Activated B cell treated with CpG ODN at 0.5 μM for 24 hours (primary cell): ENCODE measurements at regions of chr1 and their contacts with region 1.

Region 1: DNA sequence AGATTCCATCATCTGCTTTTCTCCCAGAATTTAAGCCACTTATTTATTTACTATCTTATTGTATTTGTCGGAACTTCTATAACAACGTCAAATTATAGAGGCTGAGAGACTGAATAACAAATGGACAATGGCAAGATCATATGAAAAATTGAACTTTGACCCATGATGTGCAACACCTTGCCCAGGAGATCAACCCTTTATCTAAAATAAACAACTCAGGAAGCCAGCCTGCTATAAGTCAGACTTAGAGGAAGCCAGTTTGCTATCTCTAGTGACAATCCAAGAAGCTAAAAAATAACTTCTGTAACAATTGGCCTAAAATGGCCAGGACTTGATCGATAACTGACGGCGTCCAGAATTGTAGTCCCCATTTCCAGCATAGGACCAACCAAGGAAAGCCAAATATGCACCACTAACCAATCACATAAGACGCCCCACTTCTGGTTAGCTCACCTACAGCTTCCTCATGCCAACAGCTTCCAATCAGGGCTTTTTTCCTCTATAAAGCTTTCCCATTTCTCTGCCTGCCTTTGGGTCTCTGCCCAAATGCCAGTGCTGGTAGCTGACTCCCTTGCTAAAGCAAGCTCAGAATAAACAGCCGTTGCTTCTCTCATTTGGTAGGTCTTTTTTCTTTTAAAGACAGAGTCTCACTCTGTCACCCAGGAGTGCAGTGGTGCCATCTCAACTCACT is 28.5 kb downstream of the ANP32E start:
- DNase-seq: no peak
- ATAC-seq: no peak
- H3K4me3 Mint-ChIP-seq: no peak overlapping the region
- H3K27ac Mint-ChIP-seq: no peak overlapping the region
- H3K4me1 Mint-ChIP-seq: no peaks in the 10 kb centered on the region
- H3K27me3 Mint-ChIP-seq: peaks cover 2% of the 10 kb centered on the region
- CTCF ChIP-seq: no peak

Region 2: GRCh38 chr1:150121236-150121862 is 86.1 kb before region 1 on chr1:
- CTCF ChIA-PET with region 1: no interaction called
- POLR2A ChIA-PET with region 1: interaction called, 10 read pairs
- intact Hi-C with region 1: no loop called
- DNase-seq: no peak
- ATAC-seq: no peak
- H3K4me3 Mint-ChIP-seq: no peak overlapping the region
- H3K27ac Mint-ChIP-seq: peak overlapping the region; percentile 27
- H3K4me1 Mint-ChIP-seq: peaks cover 14% of the 10 kb centered on the region
- H3K27me3 Mint-ChIP-seq: no peaks in the 10 kb centered on the region
- CTCF ChIP-seq: no peak

Region 3: GRCh38 chr1:150243003-150243402 is 35.6 kb after region 1 on chr1:
- CTCF ChIA-PET with region 1: no interaction called
- POLR2A ChIA-PET with region 1: no interaction called
- intact Hi-C with region 1: no loop called
- DNase-seq: no peak
- ATAC-seq: no peak
- H3K4me3 Mint-ChIP-seq: no peak overlapping the region
- H3K27ac Mint-ChIP-seq: no peak overlapping the region
- H3K4me1 Mint-ChIP-seq: no peaks in the 10 kb centered on the region
- H3K27me3 Mint-ChIP-seq: peaks cover 1% of the 10 kb centered on the region
- CTCF ChIP-seq: no peak

Region 4: GRCh38 chr1:150259758-150260669 is 52.6 kb after region 1 on chr1:
- CTCF ChIA-PET with region 1: no interaction called
- POLR2A ChIA-PET with region 1: no interaction called
- intact Hi-C with region 1: no loop called
- DNase-seq: no peak
- ATAC-seq: no peak
- H3K4me3 Mint-ChIP-seq: no peak overlapping the region
- H3K27ac Mint-ChIP-seq: no peak overlapping the region
- H3K4me1 Mint-ChIP-seq: peaks cover 17% of the 10 kb centered on the region
- H3K27me3 Mint-ChIP-seq: peaks cover 33% of the 10 kb centered on the region
- CTCF ChIP-seq: no peak

Region 5: GRCh38 chr1:151175910-151176309 is 968.5 kb after region 1 on chr1 and contains the start of gene TMOD4:
- CTCF ChIA-PET with region 1: no interaction called
- POLR2A ChIA-PET with region 1: no interaction called
- intact Hi-C with region 1: no loop called
- DNase-seq: no peak
- ATAC-seq: peak; percentile 81
- H3K4me3 Mint-ChIP-seq: no peak within 1 kb of the TSS
- H3K27ac Mint-ChIP-seq: no peak within 1 kb of the TSS
- H3K4me1 Mint-ChIP-seq: no peaks in the 10 kb centered on the region
- H3K27me3 Mint-ChIP-seq: no peaks in the 10 kb centered on the region
- CTCF ChIP-seq: no peak
- total RNA-seq, gene TMOD4: 3.8 and 4.4 TPM in 2 replicates